CD4-positive, alpha-beta memory T cell (primary cell): ENCODE measurements at regions of chr12 and their contacts with region 1.

Region 1: GRCh38 chr12:116277393-116278278 is at the start of gene MED13L:
- DNase-seq: peak; percentile 87 to 95 (median 91)
- H3K4me3 ChIP-seq: peak within 1 kb of the TSS; percentile 36 to 73
- H3K4me3 Mint-ChIP-seq: peak within 1 kb of the TSS; percentile 90 to 98 (median 96)
- H3K27ac ChIP-seq: peak within 1 kb of the TSS; percentile 51
- H3K27ac Mint-ChIP-seq: peak within 1 kb of the TSS; percentile 89 to 97 (median 93)
- H3K4me1 ChIP-seq: peaks cover 40% of the 10 kb centered on the region
- H3K4me1 Mint-ChIP-seq: peaks cover 29 to 61% (median 38%) of the 10 kb centered on the region in 4 donors
- H3K27me3 ChIP-seq: no peaks in the 10 kb centered on the region
- H3K27me3 Mint-ChIP-seq: no peaks in the 10 kb centered on the region
- total RNA-seq, gene MED13L: 150 to 156 TPM

Region 2: DNA sequence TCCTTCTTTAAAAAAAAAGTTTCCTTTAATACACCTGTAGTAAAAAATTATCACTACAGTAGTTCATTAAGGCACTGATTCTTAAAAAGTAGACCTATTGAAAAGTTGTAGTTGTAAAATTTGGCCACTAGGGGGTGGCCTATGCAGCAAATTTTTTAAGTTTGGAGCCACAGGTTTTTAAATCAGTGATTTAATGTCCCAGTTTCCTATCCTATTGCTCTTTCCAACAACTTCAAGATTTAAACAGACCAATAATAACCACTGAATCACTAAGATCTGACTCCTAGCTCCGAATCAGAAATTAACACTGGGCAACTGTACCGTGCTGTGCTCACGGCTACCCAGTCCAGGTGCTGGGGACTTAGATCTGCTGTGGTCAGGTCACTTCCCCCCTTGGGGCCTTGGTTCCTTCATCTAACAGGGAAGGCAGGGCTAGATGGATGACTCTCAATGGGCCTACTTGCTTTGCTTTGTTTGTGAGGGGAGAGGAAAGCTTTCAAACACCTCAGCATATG is 279.5 kb before region 1 on chr12:
- CTCF ChIA-PET with region 1: no interaction called
- POLR2A ChIA-PET with region 1: no interaction called
- intact Hi-C with region 1: loop called (anchors 5 kb)
- DNase-seq: peak in 4 of 5 donors; percentile 34 to 39 (median 36)
- H3K4me3 ChIP-seq: no peak overlapping the region
- H3K4me3 Mint-ChIP-seq: no peak overlapping the region
- H3K27ac ChIP-seq: no peak overlapping the region
- H3K27ac Mint-ChIP-seq: peak overlapping the region in 3 of 7 donors; percentile 22 to 60 (median 46)
- H3K4me1 ChIP-seq: no peaks in the 10 kb centered on the region
- H3K4me1 Mint-ChIP-seq: peaks cover 6 to 17% (median 9%) of the 10 kb centered on the region in 4 donors
- H3K27me3 ChIP-seq: no peaks in the 10 kb centered on the region
- H3K27me3 Mint-ChIP-seq: no peaks in the 10 kb centered on the region

Region 3: GRCh38 chr12:116142936-116143898 is 134.4 kb before region 1 on chr12:
- CTCF ChIA-PET with region 1: no interaction called
- POLR2A ChIA-PET with region 1: no interaction called
- intact Hi-C with region 1: loop called (anchors 5 kb)
- DNase-seq: no peak
- H3K4me3 ChIP-seq: no peak overlapping the region
- H3K4me3 Mint-ChIP-seq: peak overlapping the region in 7 of 8 donors; percentile 12 to 68 (median 61)
- H3K27ac ChIP-seq: no peak overlapping the region
- H3K27ac Mint-ChIP-seq: peak overlapping the region in 4 of 7 donors; percentile 3 to 43 (median 14)
- H3K4me1 ChIP-seq: peaks cover 34% of the 10 kb centered on the region
- H3K4me1 Mint-ChIP-seq: peaks cover 40 to 56% (median 48%) of the 10 kb centered on the region in 4 donors
- H3K27me3 ChIP-seq: no peaks in the 10 kb centered on the region
- H3K27me3 Mint-ChIP-seq: no peaks in the 10 kb centered on the region

Region 4: GRCh38 chr12:116358893-116359761 is 81.5 kb after region 1 on chr12:
- CTCF ChIA-PET with region 1: interaction called, 3 read pairs
- POLR2A ChIA-PET with region 1: no interaction called
- intact Hi-C with region 1: loop called (anchors 1 kb)
- DNase-seq: peak; percentile 62 to 86 (median 70)
- H3K4me3 ChIP-seq: peak overlapping the region; percentile 38 to 57
- H3K4me3 Mint-ChIP-seq: peak overlapping the region; percentile 74 to 89 (median 81)
- H3K27ac ChIP-seq: peak overlapping the region; percentile 9
- H3K27ac Mint-ChIP-seq: peak overlapping the region; percentile 29 to 94 (median 88)
- H3K4me1 ChIP-seq: peaks cover 26% of the 10 kb centered on the region
- H3K4me1 Mint-ChIP-seq: peaks cover 20 to 36% (median 27%) of the 10 kb centered on the region in 4 donors
- H3K27me3 ChIP-seq: no peaks in the 10 kb centered on the region
- H3K27me3 Mint-ChIP-seq: no peaks in the 10 kb centered on the region

Region 5: DNA sequence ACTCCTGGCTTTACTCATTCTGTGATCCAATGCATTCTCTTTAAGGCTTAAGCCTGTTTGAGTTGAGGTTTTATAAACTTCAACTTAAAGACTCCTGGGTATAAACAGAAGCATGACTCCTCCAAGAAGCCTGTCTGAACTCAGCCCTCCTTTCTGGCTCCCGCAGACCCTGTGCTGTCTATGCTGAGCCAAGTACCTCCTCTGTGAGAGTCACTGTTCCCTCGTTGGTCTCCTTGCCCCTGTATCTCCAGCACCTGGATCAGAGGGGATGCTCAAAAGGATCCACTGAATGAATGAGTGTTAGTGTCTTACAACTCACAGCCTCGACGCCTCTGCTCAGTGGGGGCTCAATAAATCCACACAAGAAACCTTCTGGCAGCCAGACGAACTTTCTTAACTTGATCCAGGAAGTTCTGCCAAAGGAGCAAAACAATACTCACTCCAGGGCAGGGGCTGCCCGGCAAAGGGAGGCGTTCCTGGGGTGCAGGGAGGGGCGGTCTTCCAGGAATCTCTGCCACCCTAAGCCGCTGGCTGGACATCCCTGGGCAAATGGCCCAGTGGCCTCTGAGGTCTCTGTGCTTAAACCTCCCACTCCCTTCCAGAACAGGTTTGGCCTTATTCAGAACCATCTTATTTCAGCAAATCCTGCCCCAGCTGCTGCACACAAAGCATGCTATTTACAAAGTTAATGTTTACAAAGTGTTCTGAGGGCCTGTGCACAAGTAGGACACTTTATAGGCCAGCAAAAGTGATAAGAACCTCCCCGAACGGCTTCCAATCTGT is 314.4 kb after region 1 on chr12:
- CTCF ChIA-PET with region 1: no interaction called
- POLR2A ChIA-PET with region 1: interaction called, 4 read pairs
- intact Hi-C with region 1: loop called (anchors 2 kb)
- DNase-seq: no peak
- H3K4me3 ChIP-seq: no peak overlapping the region
- H3K4me3 Mint-ChIP-seq: peak overlapping the region in 1 of 8 donors; percentile 8
- H3K27ac ChIP-seq: no peak overlapping the region
- H3K27ac Mint-ChIP-seq: peak overlapping the region in 6 of 7 donors; percentile 14 to 62 (median 35)
- H3K4me1 ChIP-seq: peaks cover 30% of the 10 kb centered on the region
- H3K4me1 Mint-ChIP-seq: peaks cover 21 to 37% (median 31%) of the 10 kb centered on the region in 4 donors
- H3K27me3 ChIP-seq: no peaks in the 10 kb centered on the region
- H3K27me3 Mint-ChIP-seq: no peaks in the 10 kb centered on the region

Region 6: GRCh38 chr12:116818948-116819832 is 541.6 kb after region 1 on chr12:
- CTCF ChIA-PET with region 1: no interaction called
- POLR2A ChIA-PET with region 1: no interaction called
- intact Hi-C with region 1: loop called (anchors 10 kb)
- DNase-seq: peak; percentile 92 to 93 (median 93)
- H3K4me3 ChIP-seq: peak overlapping the region; percentile 67 to 86
- H3K4me3 Mint-ChIP-seq: peak overlapping the region; percentile 92 to 96 (median 93)
- H3K27ac ChIP-seq: peak overlapping the region; percentile 87
- H3K27ac Mint-ChIP-seq: peak overlapping the region; percentile 96 to 100 (median 98)
- H3K4me1 ChIP-seq: peaks cover 17% of the 10 kb centered on the region
- H3K4me1 Mint-ChIP-seq: peaks cover 10 to 31% (median 22%) of the 10 kb centered on the region in 4 donors
- H3K27me3 ChIP-seq: no peaks in the 10 kb centered on the region
- H3K27me3 Mint-ChIP-seq: peaks cover 0 to 2% of the 10 kb centered on the region in 2 donors